ENCODE measurements at regions of chr9 and their contacts with region 1.

Region 1: GRCh38 chr9:121278535-121279261 is 10.7 kb downstream of the GSN start:
- DNase-seq: peak; percentile 98
- H3K4me3 ChIP-seq: no peak overlapping the region
- H3K27ac ChIP-seq: peak overlapping the region; percentile 90
- H3K4me1 ChIP-seq: peaks cover 76% of the 10 kb centered on the region
- H3K27me3 ChIP-seq: no peaks in the 10 kb centered on the region
- CTCF ChIP-seq: peak; percentile 82 to 88

Region 2: DNA sequence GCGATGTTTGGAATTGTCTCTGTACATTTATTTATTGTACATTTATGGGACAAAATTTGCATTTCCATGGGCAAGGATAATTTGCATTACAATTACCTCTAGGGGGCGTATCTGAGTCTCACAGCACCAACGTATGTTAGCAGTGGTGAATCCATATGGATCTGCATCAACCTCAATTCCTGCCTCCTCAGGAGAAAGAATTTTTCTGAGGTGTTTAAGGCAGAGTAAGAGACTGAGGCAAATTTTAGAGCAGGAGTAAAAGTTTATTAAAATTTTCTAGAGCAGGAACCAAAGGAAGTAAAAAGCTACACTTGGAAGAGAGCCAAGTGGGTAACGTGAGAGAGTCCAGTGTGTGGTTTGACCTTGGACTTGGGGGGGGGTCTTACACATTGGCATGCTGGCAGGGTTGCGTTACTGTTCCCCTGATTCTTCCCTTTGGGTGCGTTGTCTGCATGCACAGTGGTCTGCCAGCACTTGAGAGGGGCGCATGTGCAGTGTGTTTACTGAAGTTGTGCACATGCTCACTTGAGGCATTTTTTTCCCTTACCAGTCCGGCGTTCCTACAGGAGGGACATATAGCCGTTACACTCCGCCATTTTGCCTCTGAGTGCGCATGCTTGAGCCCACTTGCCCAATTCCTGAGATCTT is 56.0 kb before region 1 on chr9:
- CTCF ChIA-PET with region 1: no interaction called
- dilution Hi-C with region 1: no loop called
- in situ Hi-C with region 1: loop called in 1 of 2 experiments (anchors 10 kb)
- intact Hi-C with region 1: loop called (anchors 1 kb)
- DNase-seq: peak; percentile 30
- H3K4me3 ChIP-seq: no peak overlapping the region
- H3K27ac ChIP-seq: no peak overlapping the region
- H3K4me1 ChIP-seq: peaks cover 10% of the 10 kb centered on the region
- H3K27me3 ChIP-seq: no peaks in the 10 kb centered on the region
- CTCF ChIP-seq: peak; percentile 82 to 83

Region 3: DNA sequence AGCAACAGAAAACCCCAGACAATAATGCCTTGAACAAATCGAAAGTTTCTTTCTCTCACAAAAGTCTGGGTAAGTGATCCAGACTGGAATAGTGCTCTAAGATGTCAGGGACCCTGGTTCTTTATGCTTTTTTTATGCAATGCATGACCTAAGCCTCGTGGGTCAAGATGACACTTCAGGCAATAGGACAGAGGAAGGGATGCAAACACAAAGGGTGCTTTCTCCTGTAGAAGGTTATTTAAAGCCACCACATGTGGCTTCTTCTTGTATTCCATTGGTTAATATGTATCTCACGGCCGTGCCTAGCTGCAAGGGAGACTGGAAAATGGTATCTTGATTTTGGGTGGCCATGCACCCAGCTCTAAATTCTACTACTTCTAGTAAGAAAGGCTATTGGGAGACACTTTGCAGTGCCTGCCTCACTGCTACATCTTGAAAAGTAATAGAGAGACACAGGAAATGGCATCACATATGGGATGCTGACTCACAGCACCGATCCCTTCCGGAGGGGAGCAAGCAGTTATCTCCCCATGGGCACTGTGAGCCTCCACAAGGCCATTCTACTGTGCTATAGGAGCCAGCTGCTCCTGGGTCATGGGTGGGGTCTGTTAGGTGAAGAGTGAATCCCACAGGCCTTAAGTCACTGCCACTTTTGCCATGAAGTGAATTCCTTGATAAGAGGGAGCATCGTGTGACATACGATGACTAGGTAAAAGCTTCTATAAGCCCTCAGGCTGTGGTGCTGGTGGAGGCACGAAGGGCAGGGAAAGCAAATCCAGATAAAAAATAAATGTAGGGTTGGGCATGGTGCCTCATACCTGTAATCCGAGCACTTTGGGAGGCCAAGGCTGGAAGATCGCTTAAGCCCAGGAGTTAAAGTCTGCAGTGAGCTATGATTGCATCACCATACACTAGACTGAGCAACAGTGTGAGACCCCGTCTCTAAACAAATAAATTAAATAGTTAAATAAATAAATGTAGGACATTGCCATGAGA is 44.5 kb before region 1 on chr9:
- CTCF ChIA-PET with region 1: no interaction called
- dilution Hi-C with region 1: loop called (anchors 5 kb)
- in situ Hi-C with region 1: no loop called
- intact Hi-C with region 1: no loop called
- DNase-seq: peak; percentile 50
- H3K4me3 ChIP-seq: no peak overlapping the region
- H3K27ac ChIP-seq: peak overlapping the region; percentile 27
- H3K4me1 ChIP-seq: peaks cover 20% of the 10 kb centered on the region
- H3K27me3 ChIP-seq: no peaks in the 10 kb centered on the region
- CTCF ChIP-seq: no peak

Region 4: GRCh38 chr9:121326130-121326838 is 47.6 kb after region 1 on chr9:
- CTCF ChIA-PET with region 1: no interaction called
- dilution Hi-C with region 1: no loop called
- in situ Hi-C with region 1: no loop called
- intact Hi-C with region 1: no loop called
- DNase-seq: peak; percentile 23
- H3K4me3 ChIP-seq: no peak overlapping the region
- H3K27ac ChIP-seq: no peak overlapping the region
- H3K4me1 ChIP-seq: peaks cover 27% of the 10 kb centered on the region
- H3K27me3 ChIP-seq: no peaks in the 10 kb centered on the region
- CTCF ChIP-seq: no peak

Region 5: DNA sequence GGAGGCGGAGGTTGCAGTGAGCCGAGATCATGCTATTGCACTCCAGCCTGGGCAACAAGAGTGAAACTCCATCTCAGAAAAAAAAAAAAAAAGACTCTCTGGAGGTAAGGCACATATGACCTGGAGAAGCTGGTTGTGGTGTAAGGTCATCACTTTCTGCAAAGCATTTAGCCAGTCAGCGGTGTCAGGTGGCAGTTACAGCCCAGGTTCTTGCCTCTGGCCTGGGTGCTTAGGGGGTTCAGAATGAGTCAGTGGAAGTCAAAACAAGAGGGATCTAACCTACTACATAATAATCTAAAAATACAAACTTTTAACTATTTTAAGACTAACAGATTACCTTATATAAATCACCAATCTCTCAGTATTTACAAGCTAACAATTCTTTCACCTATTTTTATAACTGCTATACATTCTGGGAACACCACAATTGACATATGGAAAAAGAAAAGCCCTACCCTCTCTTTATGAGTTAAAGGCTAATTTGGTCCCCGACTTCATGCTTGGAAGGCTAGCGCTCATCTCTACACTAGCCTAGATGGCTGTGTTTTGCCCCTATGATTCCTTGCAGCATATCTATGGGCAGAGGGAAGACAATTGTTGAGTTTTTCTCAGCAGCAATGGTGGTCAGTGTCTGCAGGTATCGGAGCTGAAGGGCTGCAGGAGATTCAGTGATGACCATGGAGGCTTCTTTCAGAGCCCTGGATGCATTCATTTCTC is 62.1 kb after region 1 on chr9:
- CTCF ChIA-PET with region 1: no interaction called
- dilution Hi-C with region 1: no loop called
- in situ Hi-C with region 1: no loop called
- intact Hi-C with region 1: no loop called
- DNase-seq: no peak
- H3K4me3 ChIP-seq: no peak overlapping the region
- H3K27ac ChIP-seq: no peak overlapping the region
- H3K4me1 ChIP-seq: peaks cover under 1% of the 10 kb centered on the region
- H3K27me3 ChIP-seq: no peaks in the 10 kb centered on the region
- CTCF ChIP-seq: no peak

Measured in mammary epithelial cell (primary cell).